Naive thymus-derived CD4-positive, alpha-beta T cell (primary cell): ENCODE measurements at regions of chr18 and their contacts with region 1.

Region 1: DNA sequence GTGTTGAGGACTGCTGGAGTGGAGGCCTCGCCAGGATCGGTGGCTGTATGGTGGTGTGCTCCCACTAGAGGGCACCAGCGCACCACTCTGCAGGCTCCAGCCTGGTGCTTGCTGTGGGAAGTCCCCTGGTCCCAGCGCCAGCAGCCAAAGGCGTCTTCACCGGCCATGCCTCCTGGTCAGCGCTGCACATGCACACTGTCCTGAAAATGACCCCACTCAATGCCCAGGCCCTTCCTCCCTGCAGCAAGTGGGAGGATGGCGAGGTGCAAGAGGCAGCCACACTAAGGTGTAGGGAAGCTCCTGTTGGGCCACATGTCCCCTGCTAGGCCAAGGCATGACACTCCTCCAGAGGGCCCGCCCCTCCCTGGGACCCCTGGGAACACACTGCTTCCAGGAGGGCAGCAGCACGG is 136.5 kb downstream of the CTIF start:
- DNase-seq: peak; percentile 57 to 84 (median 78)
- ATAC-seq: peak; percentile 97
- H3K4me3 ChIP-seq: no peak overlapping the region
- H3K4me3 Mint-ChIP-seq: no peak overlapping the region
- H3K27ac ChIP-seq: no peak overlapping the region
- H3K27ac Mint-ChIP-seq: no peak overlapping the region
- H3K4me1 ChIP-seq: no peaks in the 10 kb centered on the region
- H3K4me1 Mint-ChIP-seq: peaks cover 0 to 12% (median 0%) of the 10 kb centered on the region in 7 donors
- H3K27me3 ChIP-seq: no peaks in the 10 kb centered on the region
- H3K27me3 Mint-ChIP-seq: no peaks in the 10 kb centered on the region

Region 2: DNA sequence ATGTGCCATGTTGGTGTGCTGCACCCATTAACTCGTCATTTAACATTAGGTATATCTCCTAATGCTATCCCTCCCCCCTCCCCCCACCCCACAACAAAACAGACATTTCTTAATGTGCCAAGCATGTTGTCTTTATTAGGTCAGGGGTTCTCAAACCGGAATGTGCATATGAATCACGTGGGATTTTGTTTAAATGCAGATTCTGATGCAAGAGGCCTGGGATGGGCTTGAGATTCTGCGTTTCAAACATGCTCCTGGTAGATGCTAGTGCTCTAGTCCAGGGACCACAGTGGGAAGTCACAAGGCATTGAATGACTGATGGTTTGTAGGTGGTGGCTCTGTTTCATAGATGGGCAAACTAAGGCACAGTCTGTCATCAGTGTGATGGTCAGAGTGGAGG is 90.7 kb after region 1 on chr18:
- CTCF ChIA-PET with region 1: no interaction called
- POLR2A ChIA-PET with region 1: no interaction called
- intact Hi-C with region 1: no loop called
- DNase-seq: no peak
- ATAC-seq: no peak
- H3K4me3 ChIP-seq: no peak overlapping the region
- H3K4me3 Mint-ChIP-seq: no peak overlapping the region
- H3K27ac ChIP-seq: no peak overlapping the region
- H3K27ac Mint-ChIP-seq: no peak overlapping the region
- H3K4me1 ChIP-seq: no peaks in the 10 kb centered on the region
- H3K4me1 Mint-ChIP-seq: peaks cover 0 to 8% (median 0%) of the 10 kb centered on the region in 7 donors
- H3K27me3 ChIP-seq: no peaks in the 10 kb centered on the region
- H3K27me3 Mint-ChIP-seq: no peaks in the 10 kb centered on the region

Region 3: GRCh38 chr18:48777026-48777743 is 101.8 kb after region 1 on chr18:
- CTCF ChIA-PET with region 1: interaction called, 3 read pairs
- POLR2A ChIA-PET with region 1: no interaction called
- intact Hi-C with region 1: loop called (anchors 5 kb)
- DNase-seq: peak; percentile 40 to 78 (median 67)
- ATAC-seq: peak; percentile 86
- H3K4me3 ChIP-seq: no peak overlapping the region
- H3K4me3 Mint-ChIP-seq: no peak overlapping the region
- H3K27ac ChIP-seq: no peak overlapping the region
- H3K27ac Mint-ChIP-seq: peak overlapping the region in 1 of 9 donors; percentile 13
- H3K4me1 ChIP-seq: peaks cover 4 to 8% of the 10 kb centered on the region in 2 donors
- H3K4me1 Mint-ChIP-seq: peaks cover 0 to 10% (median 5%) of the 10 kb centered on the region in 7 donors
- H3K27me3 ChIP-seq: no peaks in the 10 kb centered on the region
- H3K27me3 Mint-ChIP-seq: peaks cover 0 to 5% (median 0%) of the 10 kb centered on the region in 5 donors

Region 4: GRCh38 chr18:48951448-48952286 is 276.3 kb after region 1 on chr18:
- CTCF ChIA-PET with region 1: no interaction called
- POLR2A ChIA-PET with region 1: no interaction called
- intact Hi-C with region 1: loop called in 1 of 2 experiments (anchors 5 kb)
- DNase-seq: peak; percentile 59 to 79 (median 67)
- ATAC-seq: peak; percentile 69
- H3K4me3 ChIP-seq: peak overlapping the region; percentile 69
- H3K4me3 Mint-ChIP-seq: peak overlapping the region; percentile 84 to 97 (median 94)
- H3K27ac ChIP-seq: peak overlapping the region; percentile 76
- H3K27ac Mint-ChIP-seq: peak overlapping the region; percentile 87 to 99 (median 96)
- H3K4me1 ChIP-seq: peaks cover 26 to 38% of the 10 kb centered on the region in 2 donors
- H3K4me1 Mint-ChIP-seq: peaks cover 24 to 55% (median 44%) of the 10 kb centered on the region in 7 donors
- H3K27me3 ChIP-seq: no peaks in the 10 kb centered on the region
- H3K27me3 Mint-ChIP-seq: peaks cover 0 to 11% (median 0%) of the 10 kb centered on the region in 5 donors

Region 5: GRCh38 chr18:49041435-49042245 is 366.3 kb after region 1 on chr18:
- CTCF ChIA-PET with region 1: interaction called, 4 read pairs
- POLR2A ChIA-PET with region 1: no interaction called
- intact Hi-C with region 1: loop called (anchors 1 kb)
- DNase-seq: peak in 8 of 9 donors; percentile 16 to 53 (median 44)
- ATAC-seq: peak; percentile 74
- H3K4me3 ChIP-seq: no peak overlapping the region
- H3K4me3 Mint-ChIP-seq: no peak overlapping the region
- H3K27ac ChIP-seq: no peak overlapping the region
- H3K27ac Mint-ChIP-seq: peak overlapping the region in 1 of 9 donors; percentile 35
- H3K4me1 ChIP-seq: no peaks in the 10 kb centered on the region
- H3K4me1 Mint-ChIP-seq: peaks cover 0 to 10% (median 7%) of the 10 kb centered on the region in 7 donors
- H3K27me3 ChIP-seq: no peaks in the 10 kb centered on the region
- H3K27me3 Mint-ChIP-seq: no peaks in the 10 kb centered on the region

Region 6: DNA sequence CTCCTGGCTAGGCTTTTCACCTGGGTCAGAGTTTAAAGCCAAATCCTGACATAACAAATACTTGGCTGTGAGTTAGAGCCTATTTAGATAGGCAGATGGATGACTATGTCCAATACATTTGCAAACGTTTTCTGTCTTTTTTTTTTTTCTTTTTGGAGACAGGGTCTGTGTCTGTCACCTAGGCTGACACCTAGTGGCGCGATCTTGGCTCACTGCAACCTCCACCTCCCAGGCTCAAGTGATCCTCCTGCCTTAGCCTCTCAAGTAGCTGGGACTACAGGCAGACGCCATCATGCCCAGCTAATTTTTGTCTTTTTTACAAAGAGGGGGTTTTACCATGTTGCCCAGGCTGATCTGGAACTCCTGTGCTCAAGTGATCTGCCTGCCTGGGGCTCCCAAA is 660.3 kb after region 1 on chr18:
- CTCF ChIA-PET with region 1: no interaction called
- POLR2A ChIA-PET with region 1: no interaction called
- intact Hi-C with region 1: loop called (anchors 1 to 10 kb)
- DNase-seq: peak in 1 of 9 donors; percentile 5
- ATAC-seq: no peak
- H3K4me3 ChIP-seq: no peak overlapping the region
- H3K4me3 Mint-ChIP-seq: no peak overlapping the region
- H3K27ac ChIP-seq: no peak overlapping the region
- H3K27ac Mint-ChIP-seq: no peak overlapping the region
- H3K4me1 ChIP-seq: no peaks in the 10 kb centered on the region
- H3K4me1 Mint-ChIP-seq: peaks cover 0 to 22% (median 13%) of the 10 kb centered on the region in 7 donors
- H3K27me3 ChIP-seq: no peaks in the 10 kb centered on the region
- H3K27me3 Mint-ChIP-seq: no peaks in the 10 kb centered on the region

Region 7: DNA sequence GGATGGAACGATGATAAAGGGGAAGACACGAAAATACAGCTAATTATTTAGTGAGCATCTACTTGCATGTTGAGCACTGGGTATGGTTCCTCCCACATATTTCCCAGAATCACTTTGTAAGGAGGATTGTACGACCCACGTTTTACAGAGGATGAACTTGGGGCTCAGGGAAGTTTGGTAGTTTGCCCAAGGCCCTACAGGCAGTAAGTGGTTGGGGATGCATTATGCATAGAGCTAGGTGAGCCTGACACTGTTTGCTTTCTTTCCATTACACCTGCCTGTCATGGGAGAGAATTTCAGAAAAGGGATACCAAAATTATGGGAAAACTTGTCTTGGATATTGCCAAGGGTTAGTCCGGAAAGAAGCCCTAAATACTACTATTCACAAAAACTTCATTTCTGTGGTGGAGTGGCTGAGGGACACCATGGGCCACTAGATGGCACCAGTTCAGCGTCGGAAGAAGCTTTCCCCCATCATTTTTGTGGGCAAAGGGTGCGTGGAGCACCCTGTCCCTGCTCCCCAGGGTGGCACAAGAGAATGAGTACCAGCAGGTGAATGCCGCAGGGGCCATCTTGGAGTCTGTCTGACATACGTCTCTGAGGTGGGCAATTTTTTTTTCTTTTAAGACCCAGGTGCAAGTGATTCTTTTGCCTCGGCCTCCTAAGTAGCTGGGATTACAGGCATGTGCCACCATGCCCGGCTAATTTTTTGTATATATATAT is 835.2 kb after region 1 on chr18:
- CTCF ChIA-PET with region 1: no interaction called
- POLR2A ChIA-PET with region 1: no interaction called
- intact Hi-C with region 1: loop called (anchors 1 kb)
- DNase-seq: peak in 7 of 9 donors; percentile 31 to 56 (median 46)
- ATAC-seq: peak; percentile 85
- H3K4me3 ChIP-seq: no peak overlapping the region
- H3K4me3 Mint-ChIP-seq: no peak overlapping the region
- H3K27ac ChIP-seq: no peak overlapping the region
- H3K27ac Mint-ChIP-seq: no peak overlapping the region
- H3K4me1 ChIP-seq: no peaks in the 10 kb centered on the region
- H3K4me1 Mint-ChIP-seq: no peaks in the 10 kb centered on the region
- H3K27me3 ChIP-seq: no peaks in the 10 kb centered on the region
- H3K27me3 Mint-ChIP-seq: peaks cover 8 to 22% (median 15%) of the 10 kb centered on the region in 5 donors

Region 8: DNA sequence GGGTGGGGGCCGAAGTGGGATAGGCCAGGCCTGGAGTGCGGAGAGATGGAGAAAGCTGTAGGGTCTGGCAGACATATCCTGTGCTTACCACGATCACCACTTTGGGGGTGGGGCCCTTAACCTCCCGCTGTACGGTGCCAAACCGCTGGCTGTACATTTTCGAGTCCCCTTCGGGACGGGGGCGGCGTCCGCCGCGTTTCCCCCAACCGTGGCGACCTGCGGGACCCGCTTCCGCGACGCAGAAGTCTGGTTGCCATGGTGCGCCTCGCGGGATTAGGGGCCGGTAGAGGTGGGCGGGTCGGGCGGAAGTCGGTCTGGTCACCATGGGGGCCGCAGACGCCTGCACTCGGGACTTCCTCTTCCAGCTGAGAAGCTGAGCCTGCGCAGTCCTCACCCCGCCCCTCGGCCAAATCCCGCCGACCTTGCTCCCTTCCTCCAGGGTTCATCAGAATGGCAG is 1590.9 kb after region 1 on chr18 and contains the start of gene CFAP53:
- CTCF ChIA-PET with region 1: no interaction called
- POLR2A ChIA-PET with region 1: no interaction called
- intact Hi-C with region 1: loop called in 1 of 2 experiments (anchors 1 kb)
- DNase-seq: peak; percentile 51 to 83 (median 69)
- ATAC-seq: peak; percentile 88
- H3K4me3 ChIP-seq: peak within 1 kb of the TSS; percentile 59
- H3K4me3 Mint-ChIP-seq: peak within 1 kb of the TSS; percentile 79 to 94 (median 90)
- H3K27ac ChIP-seq: peak within 1 kb of the TSS; percentile 50
- H3K27ac Mint-ChIP-seq: peak within 1 kb of the TSS; percentile 57 to 92 (median 81)
- H3K4me1 ChIP-seq: peaks cover 4 to 5% of the 10 kb centered on the region in 2 donors
- H3K4me1 Mint-ChIP-seq: peaks cover 9 to 29% (median 25%) of the 10 kb centered on the region in 7 donors
- H3K27me3 ChIP-seq: no peaks in the 10 kb centered on the region
- H3K27me3 Mint-ChIP-seq: peaks cover 0 to 17% (median 0%) of the 10 kb centered on the region in 5 donors
- total RNA-seq, gene CFAP53: 0.19 to 1.8 (median 0.64) TPM